ENCODE measurements at regions of chr15 and their contacts with region 1.

Region 1: DNA sequence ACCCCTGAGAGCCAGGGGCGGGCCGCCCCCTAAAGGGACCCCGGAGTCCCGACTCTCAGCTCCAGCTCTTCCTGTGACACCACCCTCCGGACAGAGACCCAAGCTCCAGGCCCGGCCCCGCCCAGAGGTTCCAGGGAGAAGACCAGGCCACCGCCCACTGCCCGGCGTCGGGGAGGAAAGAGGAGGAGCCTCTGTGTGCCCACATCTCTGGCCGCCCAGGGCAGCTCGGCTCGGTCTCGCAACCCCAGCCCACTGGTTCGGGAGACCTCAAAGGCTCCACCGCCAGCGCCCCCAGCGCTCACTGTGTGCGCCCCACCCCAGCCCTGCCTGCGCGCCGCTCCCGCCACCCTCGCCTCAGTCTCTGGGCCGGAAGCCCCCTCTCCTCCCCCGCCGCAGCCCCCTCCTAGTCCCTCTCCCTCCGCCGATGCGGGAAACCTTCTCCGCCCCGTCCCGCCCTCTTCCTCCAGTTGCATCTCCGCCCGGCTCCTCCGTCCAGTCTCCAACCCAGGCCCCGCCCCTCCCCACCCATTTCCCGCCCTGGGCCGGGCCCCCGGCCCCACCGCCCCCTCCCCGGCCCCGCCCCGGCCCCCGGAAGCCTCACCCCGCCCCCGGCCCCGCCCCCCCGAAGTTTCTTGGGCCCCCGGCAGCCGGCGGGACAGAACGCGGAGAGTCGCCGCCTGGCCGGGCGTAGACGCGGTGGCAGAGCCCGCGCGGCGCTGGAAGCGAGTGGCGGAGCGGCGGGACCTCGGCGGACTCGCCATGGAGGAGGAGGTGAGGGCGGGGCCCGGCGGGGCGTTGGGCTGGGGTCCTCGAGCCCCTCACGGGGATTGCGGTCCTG is at the start of gene PLEKHO2:
- DNase-seq: peak; percentile 97
- ATAC-seq: peak; percentile 88
- total RNA-seq, gene PLEKHO2: 8.5 TPM

Region 2: GRCh38 chr15:64423970-64424369 is 417.5 kb before region 1 on chr15:
- intact Hi-C with region 1: no loop called
- DNase-seq: no peak
- ATAC-seq: no peak

Region 3: DNA sequence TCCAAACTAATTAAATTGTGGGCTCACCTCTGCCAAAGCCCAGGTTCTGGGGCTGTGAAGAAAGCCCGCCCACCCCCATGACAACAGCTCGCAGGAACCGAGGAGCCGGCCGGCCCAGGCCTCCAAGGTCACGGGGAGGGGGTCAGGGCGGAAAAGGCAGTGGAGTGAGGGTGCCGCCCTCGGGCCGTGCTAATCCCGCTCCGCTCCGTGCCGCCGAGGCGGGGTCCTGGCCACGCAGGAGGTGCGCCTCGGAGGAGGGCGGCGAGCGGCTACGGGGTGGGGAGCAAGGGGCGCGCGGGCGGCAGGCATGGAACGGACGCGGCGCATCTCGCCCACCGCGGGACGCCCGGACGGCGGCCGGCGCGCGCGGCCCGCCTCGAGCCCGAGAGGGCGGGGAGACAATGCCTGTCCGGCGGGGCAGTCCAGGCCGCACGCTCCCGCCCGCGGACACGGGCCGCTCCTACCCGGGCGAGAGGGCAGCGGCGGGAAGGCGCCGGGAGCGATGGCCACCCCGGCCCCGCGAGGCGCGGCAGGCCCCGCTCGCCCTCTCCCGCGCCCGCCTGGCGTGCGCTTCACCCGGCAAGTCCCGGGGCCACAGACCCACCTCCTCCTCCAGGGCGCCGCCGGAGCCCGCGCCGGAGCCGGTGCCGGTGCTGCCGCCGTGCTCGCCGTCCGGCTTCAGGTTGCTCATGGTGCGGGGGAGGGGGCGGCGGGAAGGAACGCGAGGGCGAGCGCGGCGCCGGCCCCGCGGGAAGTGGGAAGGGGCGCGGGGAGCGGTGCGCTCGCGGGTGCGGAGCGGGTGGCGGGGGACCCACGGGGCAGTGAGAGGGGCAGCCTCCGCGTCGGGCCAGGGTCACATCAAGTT is 66.6 kb before region 1 on chr15:
- intact Hi-C with region 1: no loop called
- DNase-seq: peak; percentile 59
- ATAC-seq: peak; percentile 60

Region 4: DNA sequence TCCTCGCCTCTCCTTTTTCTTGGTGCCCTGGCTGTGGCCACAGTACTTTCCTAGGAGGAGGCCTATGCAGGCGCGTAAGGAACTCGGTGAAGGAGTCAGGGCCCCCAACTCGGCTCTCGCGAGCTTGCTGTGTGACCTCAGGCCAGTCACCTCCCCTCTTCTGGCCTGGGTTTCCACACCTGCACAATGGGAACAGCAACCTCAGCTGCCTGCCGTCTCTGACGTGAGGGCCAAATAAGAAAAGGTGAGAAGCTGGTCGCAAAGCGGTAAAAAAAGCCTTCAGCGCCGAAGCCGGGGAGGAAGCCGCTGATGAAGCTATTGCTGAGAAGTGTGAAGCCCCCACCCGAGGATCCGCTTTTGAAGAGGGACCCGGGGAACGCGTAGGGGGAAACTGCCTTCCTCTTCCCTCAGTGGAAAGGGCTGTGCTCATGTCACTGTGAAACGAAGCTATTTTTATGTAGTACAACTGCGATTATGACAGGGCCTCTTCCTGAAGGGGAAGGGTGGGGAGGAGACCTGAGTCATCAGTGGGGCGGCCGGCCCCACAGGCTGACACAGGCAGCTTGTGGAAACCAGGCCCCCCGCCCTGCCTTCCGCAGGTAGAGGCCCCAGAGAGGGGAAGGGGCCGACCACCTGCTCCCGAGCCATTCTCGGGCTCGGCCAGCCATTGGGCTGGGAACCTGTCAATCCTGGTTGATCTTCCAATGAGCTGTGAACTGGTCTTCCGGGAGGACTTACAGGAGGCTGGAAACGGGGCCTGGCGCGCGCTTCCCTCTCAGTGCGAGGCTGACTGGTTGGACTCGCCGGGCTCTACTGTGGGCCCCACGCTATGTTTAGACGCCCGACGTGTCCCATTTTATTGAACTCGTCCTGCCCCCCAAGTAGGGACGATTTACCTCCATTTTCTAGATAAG is 52.3 kb after region 1 on chr15:
- intact Hi-C with region 1: loop called (anchors 10 kb)
- DNase-seq: peak; percentile 96
- ATAC-seq: peak; percentile 81

Region 5: DNA sequence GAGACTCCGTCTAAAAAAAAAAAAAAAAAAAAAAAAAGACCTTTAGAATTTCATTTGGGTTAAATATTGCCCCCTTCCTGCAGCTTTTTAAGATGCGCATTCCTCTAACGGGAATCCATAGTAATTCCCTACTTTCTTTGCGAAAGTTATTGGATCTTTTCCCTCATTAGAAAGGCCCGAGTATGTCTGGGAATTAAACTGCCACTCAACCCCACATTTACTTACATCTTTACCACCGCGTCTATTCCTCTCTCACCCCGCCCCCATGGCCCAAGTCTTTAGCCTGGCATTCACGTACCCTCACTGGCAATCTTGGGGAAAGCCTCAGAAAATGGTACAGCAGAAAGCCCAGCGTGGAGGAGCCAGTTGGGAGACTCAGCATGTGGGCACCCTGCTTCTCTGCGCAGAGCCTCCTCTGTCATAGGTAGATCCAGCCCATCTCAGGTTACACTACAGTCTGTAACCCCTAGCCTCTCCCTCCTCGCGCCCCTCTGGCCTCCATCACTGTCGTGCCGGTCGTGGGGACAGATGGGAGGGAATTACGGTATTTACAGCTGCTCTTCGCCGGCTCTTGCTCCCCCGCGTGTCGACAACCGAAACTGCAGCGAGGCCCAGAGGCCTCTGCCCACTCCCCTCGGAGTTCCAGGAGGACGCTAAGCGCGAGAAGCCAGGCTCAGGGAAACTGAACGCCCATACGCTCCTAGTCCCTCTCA is 63.8 kb after region 1 on chr15:
- intact Hi-C with region 1: no loop called
- DNase-seq: peak; percentile 88
- ATAC-seq: peak; percentile 96

Measured in left ventricle myocardium superior (tissue), 1 donor.